Cardiac septum (tissue), 1 donor: ENCODE measurements at regions of chr22 and their contacts with region 1.

Region 1: DNA sequence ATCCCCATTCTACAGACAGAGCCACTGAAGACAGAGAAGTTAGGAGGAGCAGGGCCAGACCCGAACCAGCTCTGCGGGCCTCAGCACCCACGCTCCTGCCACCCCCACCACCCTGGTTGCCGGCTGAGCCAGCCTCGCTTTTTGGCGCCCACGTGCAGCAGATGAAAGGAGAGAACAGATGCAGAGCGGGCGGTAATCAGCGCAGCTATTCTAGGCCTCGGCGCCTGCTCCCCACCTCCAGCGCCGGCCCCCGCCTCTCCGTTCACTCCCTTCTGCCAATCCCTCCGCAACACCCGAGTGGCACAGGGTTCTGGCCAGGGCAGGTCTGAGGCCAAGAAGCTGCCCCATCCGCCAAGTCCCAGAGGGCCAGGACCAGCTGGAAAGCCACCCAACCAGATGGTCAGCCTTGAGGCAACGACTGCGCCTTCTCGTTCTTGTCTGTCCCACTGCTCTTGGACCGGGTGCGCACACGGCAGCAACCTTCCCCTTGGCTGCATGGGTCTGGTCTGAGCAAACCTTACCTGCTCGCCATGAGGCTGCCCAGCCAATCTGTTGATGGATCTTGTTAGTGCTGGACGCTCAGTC is 16.8 kb downstream of the DNAL4 start:
- DNase-seq: no peak

Region 2: GRCh38 chr22:38684895-38685294 is 92.3 kb before region 1 on chr22:
- intact Hi-C with region 1: no loop called
- DNase-seq: no peak

Region 3: GRCh38 chr22:38799265-38800002 is 22.3 kb after region 1 on chr22:
- intact Hi-C with region 1: loop called (anchors 2 kb)
- DNase-seq: no peak

Region 4: GRCh38 chr22:39123751-39124601 is 346.8 kb after region 1 on chr22:
- intact Hi-C with region 1: loop called (anchors 10 kb)
- DNase-seq: no peak